Activated naive CD4-positive, alpha-beta T cell treated with anti-CD3 and anti-CD28 coated beads for 36 hours (primary cell): ENCODE measurements at regions of chr6 and their contacts with region 1.

Region 1: GRCh38 chr6:46704562-46704961 is 16.9 kb downstream of the TDRD6 start:
- DNase-seq: no peak
- H3K4me3 Mint-ChIP-seq: no peak overlapping the region
- H3K27ac Mint-ChIP-seq: no peak overlapping the region
- H3K4me1 Mint-ChIP-seq: no peaks in the 10 kb centered on the region
- H3K27me3 Mint-ChIP-seq: peaks cover 26% of the 10 kb centered on the region

Region 2: DNA sequence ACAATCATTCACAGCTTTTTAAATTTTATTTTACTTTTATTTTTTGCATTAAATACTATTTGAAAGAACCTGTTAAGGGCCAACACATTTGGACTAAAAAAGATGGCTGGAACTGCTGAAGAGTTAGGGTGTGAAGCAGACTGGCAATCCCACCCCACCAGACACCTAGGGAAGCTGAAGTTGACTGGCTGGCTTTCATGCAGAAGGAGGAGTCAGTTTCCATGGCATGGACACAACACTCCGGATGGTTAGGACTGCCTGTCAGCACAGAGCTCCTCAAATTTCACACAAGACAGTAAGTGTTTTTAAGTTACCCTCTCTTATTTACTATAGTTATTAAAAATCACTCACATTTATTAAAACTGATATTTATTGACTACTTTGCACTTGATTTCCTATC is 42.1 kb after region 1 on chr6 and contains the start of gene ANKRD66:
- CTCF ChIA-PET with region 1: no interaction called
- intact Hi-C with region 1: no loop called
- DNase-seq: no peak
- H3K4me3 Mint-ChIP-seq: no peak within 1 kb of the TSS
- H3K27ac Mint-ChIP-seq: no peak within 1 kb of the TSS
- H3K4me1 Mint-ChIP-seq: no peaks in the 10 kb centered on the region
- H3K27me3 Mint-ChIP-seq: peaks cover 13% of the 10 kb centered on the region
- total RNA-seq, gene ANKRD66: not detected

Region 3: GRCh38 chr6:46781478-46782378 is 77.2 kb after region 1 on chr6:
- CTCF ChIA-PET with region 1: no interaction called
- intact Hi-C with region 1: loop called (anchors 2 kb)
- DNase-seq: peak; percentile 60
- H3K4me3 Mint-ChIP-seq: no peak overlapping the region
- H3K27ac Mint-ChIP-seq: no peak overlapping the region
- H3K4me1 Mint-ChIP-seq: no peaks in the 10 kb centered on the region
- H3K27me3 Mint-ChIP-seq: peaks cover 10% of the 10 kb centered on the region

Region 4: DNA sequence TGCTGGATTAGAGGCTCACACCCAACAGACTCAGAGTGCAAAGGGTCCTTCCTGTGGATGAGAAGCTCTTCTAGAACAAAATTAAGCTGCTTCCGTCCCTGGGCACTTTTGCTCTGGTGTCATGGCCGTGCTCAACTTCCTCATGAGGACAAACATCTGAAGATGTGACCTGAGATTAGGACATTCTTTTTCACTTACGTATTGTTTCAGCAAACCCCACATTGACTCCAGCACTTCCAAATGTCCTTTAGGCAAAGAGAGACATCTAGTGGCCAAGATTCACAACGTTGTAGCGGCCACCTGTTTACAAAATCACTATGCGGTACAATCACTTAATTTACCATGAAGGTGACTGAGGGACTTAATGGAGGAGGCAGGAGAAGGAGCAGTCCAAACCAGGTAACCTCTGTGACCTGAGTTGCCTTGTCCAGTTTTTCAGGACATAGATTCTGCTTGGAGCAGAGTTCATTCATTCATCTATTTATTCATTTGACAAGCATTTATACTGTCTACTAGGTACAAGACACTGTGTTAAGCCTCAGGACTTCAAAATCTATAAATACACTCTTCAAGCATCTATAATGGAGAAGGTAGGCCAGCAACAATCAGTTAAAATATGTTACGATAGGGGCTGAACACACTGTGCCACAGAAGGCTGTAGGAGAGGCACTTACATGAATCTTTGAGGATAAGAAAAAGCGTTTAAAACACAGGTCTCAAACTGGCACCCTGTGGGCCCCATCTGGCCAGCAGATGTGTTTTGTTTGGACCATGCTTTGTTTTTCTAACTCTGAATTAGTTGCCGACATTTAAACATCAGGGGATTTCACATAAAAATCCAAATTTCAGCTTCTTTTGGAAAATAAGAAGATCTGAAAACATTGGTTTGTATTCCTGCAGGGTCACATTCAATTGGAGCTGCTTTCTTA is 343.2 kb after region 1 on chr6:
- CTCF ChIA-PET with region 1: interaction called, 3 read pairs
- intact Hi-C with region 1: loop called (anchors 1 kb)
- DNase-seq: peak; percentile 49
- H3K4me3 Mint-ChIP-seq: no peak overlapping the region
- H3K27ac Mint-ChIP-seq: no peak overlapping the region
- H3K4me1 Mint-ChIP-seq: no peaks in the 10 kb centered on the region
- H3K27me3 Mint-ChIP-seq: peaks cover 7% of the 10 kb centered on the region

Region 5: DNA sequence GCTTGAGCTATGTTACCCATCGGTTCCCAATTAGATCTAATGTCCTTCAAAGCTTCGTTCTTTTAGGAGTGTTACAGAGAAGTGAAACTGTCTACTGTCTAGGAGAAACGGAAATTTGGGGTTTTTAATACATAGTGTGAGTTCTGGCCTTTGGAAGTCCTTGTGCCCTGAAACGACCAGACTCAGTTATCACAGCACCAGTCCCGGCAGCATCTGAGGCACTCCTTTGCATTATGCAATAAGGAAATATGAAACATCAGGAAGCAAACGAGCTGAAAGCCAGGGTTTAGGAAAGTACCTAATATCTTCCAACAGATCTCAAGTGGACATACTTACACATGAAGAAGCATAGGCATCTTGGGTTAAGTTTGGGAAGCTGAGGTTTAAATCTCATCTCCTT is 399.4 kb after region 1 on chr6:
- CTCF ChIA-PET with region 1: no interaction called
- intact Hi-C with region 1: no loop called
- DNase-seq: no peak
- H3K4me3 Mint-ChIP-seq: no peak overlapping the region
- H3K27ac Mint-ChIP-seq: no peak overlapping the region
- H3K4me1 Mint-ChIP-seq: no peaks in the 10 kb centered on the region
- H3K27me3 Mint-ChIP-seq: peaks cover 6% of the 10 kb centered on the region